ENCODE measurements at regions of chr2 and their contacts with region 1.

Region 1: DNA sequence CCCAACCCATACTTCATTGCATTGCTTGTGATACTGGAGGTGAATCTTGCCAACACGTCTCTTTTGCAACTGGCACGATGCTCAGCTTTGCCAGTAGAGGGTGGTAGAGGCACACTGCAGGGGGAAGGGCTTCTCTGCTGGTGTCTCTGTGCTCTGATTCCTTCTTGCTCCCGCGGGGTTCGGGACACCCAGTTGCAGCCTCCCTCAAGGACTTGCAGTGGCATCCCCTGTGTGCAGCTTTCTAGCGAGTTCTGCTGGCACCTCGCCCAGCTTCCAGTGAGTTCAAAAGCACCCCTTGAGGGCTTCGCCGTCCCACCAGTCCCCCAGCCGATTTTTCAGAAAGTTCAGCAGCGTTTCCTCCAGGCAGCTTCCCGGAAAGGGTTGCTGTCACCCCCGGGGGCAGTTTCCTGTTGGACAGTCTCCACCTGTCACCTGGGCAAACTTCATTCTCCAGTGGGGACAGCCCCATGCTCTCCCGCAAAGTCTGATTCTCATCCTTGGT is 35.3 kb upstream of the EN1 start:
- DNase-seq: peak; percentile 78
- ATAC-seq: peak; percentile 93
- H3K4me3 ChIP-seq: peak overlapping the region; percentile 36
- H3K27ac ChIP-seq: no peak overlapping the region
- H3K4me1 ChIP-seq: peaks cover 4% of the 10 kb centered on the region
- H3K27me3 ChIP-seq: peaks cover 16% of the 10 kb centered on the region
- CTCF ChIP-seq: peak; percentile 84

Region 2: GRCh38 chr2:119174216-119175037 is 291.7 kb after region 1 on chr2:
- intact Hi-C with region 1: loop called (anchors 10 kb)
- DNase-seq: peak; percentile 75
- ATAC-seq: peak; percentile 79
- H3K4me3 ChIP-seq: no peak overlapping the region
- H3K27ac ChIP-seq: no peak overlapping the region
- H3K4me1 ChIP-seq: no peaks in the 10 kb centered on the region
- H3K27me3 ChIP-seq: no peaks in the 10 kb centered on the region
- CTCF ChIP-seq: peak; percentile 72